Naive thymus-derived CD4-positive, alpha-beta T cell (primary cell): ENCODE measurements at regions of chr14 and their contacts with region 1.

Region 1: DNA sequence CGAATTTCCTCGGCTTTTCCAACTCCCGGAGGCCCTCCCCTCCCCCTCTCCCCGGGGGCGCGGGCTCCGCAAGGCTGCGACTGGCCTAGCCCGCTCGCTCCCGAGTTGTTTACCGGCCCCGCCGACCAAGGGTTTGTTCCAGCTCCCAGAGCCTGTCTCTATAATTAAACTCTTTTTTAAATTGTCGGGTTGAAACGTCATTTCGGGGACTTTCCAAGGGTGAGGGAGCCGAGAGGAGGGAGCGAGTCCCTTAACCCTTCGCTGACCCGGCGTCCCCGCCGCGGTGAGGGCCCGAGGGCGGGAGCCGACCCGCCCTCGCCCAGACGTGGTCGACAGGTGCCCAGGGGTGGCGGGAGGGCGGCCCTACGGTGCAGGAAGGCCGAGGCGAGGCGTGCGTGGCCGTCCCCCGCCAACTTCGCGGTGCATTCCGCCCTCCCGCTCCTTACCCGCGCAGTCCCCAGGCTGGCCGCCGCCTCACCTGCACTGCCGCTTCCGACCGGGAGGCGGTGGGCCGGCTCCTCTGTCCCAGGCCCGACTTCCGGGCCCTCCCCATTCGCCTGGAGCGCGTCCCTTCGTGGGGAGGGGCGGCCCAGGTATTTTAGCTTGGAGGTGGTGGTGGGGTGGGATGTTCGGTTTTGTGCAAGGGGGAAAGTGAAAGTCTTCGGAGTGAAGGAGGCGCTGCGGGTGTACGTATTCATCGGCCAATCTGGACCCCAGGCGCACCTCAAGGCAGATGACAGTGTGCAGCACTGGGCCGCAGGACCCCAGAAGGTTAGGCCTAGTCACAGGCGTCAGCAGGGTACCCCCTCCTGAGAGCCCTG is 2.9 kb upstream of the ZFP36L1 start:
- DNase-seq: peak; percentile 77 to 92 (median 86)
- ATAC-seq: peak; percentile 56
- H3K4me3 ChIP-seq: peak overlapping the region; percentile 91
- H3K4me3 Mint-ChIP-seq: peak overlapping the region; percentile 92 to 99 (median 95)
- H3K27ac ChIP-seq: peak overlapping the region; percentile 100
- H3K27ac Mint-ChIP-seq: peak overlapping the region; percentile 91 to 100 (median 98)
- H3K4me1 ChIP-seq: peaks cover 11 to 18% of the 10 kb centered on the region in 2 donors
- H3K4me1 Mint-ChIP-seq: peaks cover 9 to 37% (median 31%) of the 10 kb centered on the region in 7 donors
- H3K27me3 ChIP-seq: no peaks in the 10 kb centered on the region
- H3K27me3 Mint-ChIP-seq: peaks cover 0 to 4% (median 0%) of the 10 kb centered on the region in 5 donors

Region 2: GRCh38 chr14:68210729-68211299 is 585.0 kb before region 1 on chr14:
- CTCF ChIA-PET with region 1: interaction called, 3 read pairs
- POLR2A ChIA-PET with region 1: no interaction called
- intact Hi-C with region 1: loop called in 1 of 2 experiments (anchors 2 kb)
- DNase-seq: peak in 8 of 9 donors; percentile 10 to 54 (median 43)
- ATAC-seq: peak; percentile 86
- H3K4me3 ChIP-seq: peak overlapping the region; percentile 59
- H3K4me3 Mint-ChIP-seq: peak overlapping the region; percentile 75 to 90 (median 88)
- H3K27ac ChIP-seq: peak overlapping the region; percentile 23
- H3K27ac Mint-ChIP-seq: peak overlapping the region; percentile 71 to 94 (median 87)
- H3K4me1 ChIP-seq: peaks cover 28 to 33% of the 10 kb centered on the region in 2 donors
- H3K4me1 Mint-ChIP-seq: peaks cover 31 to 50% (median 38%) of the 10 kb centered on the region in 7 donors
- H3K27me3 ChIP-seq: no peaks in the 10 kb centered on the region
- H3K27me3 Mint-ChIP-seq: peaks cover 0 to 2% (median 0%) of the 10 kb centered on the region in 5 donors

Region 3: GRCh38 chr14:68506021-68506644 is 289.7 kb before region 1 on chr14:
- CTCF ChIA-PET with region 1: interaction called, 41 read pairs
- POLR2A ChIA-PET with region 1: interaction called, 149 read pairs
- intact Hi-C with region 1: no loop called
- DNase-seq: peak in 2 of 9 donors; percentile 13 to 14
- ATAC-seq: no peak
- H3K4me3 ChIP-seq: peak overlapping the region; percentile 19
- H3K4me3 Mint-ChIP-seq: peak overlapping the region; percentile 39 to 84 (median 78)
- H3K27ac ChIP-seq: peak overlapping the region; percentile 52
- H3K27ac Mint-ChIP-seq: peak overlapping the region in 8 of 9 donors; percentile 89 to 98 (median 93)
- H3K4me1 ChIP-seq: peaks cover 29 to 66% of the 10 kb centered on the region in 2 donors
- H3K4me1 Mint-ChIP-seq: peaks cover 28 to 93% (median 86%) of the 10 kb centered on the region in 7 donors
- H3K27me3 ChIP-seq: no peaks in the 10 kb centered on the region
- H3K27me3 Mint-ChIP-seq: no peaks in the 10 kb centered on the region

Region 4: GRCh38 chr14:68807148-68807600 is 11.4 kb after region 1 on chr14:
- CTCF ChIA-PET with region 1: interaction called, 169 read pairs
- POLR2A ChIA-PET with region 1: interaction called, 1,273 read pairs
- intact Hi-C with region 1: no loop called
- DNase-seq: peak in 2 of 9 donors; percentile 33 to 37
- ATAC-seq: peak; percentile 82
- H3K4me3 ChIP-seq: no peak overlapping the region
- H3K4me3 Mint-ChIP-seq: peak overlapping the region in 7 of 10 donors; percentile 8 to 60 (median 45)
- H3K27ac ChIP-seq: no peak overlapping the region
- H3K27ac Mint-ChIP-seq: peak overlapping the region in 8 of 9 donors; percentile 6 to 88 (median 75)
- H3K4me1 ChIP-seq: peaks cover 3 to 17% of the 10 kb centered on the region in 2 donors
- H3K4me1 Mint-ChIP-seq: peaks cover 10 to 67% (median 61%) of the 10 kb centered on the region in 7 donors
- H3K27me3 ChIP-seq: no peaks in the 10 kb centered on the region
- H3K27me3 Mint-ChIP-seq: no peaks in the 10 kb centered on the region

Region 5: DNA sequence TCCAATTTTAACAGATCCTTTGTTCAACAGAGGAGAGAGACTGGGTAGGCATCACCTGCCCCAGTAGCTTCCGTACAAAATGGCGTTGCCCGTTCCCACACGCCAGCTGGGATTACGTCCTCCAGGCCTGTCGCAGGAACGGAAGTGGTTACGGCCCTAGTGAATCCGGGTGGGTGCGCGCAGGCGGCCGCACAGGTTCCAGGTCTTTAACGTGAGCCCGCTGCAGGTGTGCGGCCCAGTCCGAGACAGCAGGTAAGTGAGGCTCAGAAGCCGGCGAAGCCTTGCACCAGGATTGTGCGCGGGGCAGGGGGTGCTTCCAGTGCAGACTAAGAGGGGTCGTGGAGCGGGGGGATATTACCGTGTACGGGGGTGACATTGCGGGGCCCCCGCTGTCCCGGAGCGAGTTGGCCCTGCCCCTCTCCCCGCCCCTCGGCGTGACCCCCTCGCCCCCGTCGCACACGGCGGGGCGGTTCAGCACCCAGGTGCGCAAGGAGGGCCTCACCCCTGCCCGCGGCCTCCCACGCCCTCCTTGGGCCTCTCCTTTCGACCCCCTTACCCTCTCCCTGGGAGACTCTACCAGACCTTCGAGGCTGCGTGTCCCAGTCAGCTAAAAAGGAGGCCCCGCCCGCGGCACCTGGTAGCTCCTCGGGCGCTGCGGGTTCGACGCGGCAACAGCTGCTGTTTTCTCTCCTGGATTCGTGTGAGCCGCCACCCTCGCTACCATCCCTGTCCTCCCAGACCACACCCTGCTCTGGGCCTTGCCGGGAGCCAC is 395.7 kb after region 1 on chr14 and contains the start of gene EXD2:
- CTCF ChIA-PET with region 1: no interaction called
- POLR2A ChIA-PET with region 1: no interaction called
- intact Hi-C with region 1: loop called in 1 of 2 experiments (anchors 5 kb)
- DNase-seq: peak; percentile 27 to 68 (median 61)
- ATAC-seq: peak; percentile 81
- H3K4me3 ChIP-seq: peak within 1 kb of the TSS; percentile 71
- H3K4me3 Mint-ChIP-seq: peak within 1 kb of the TSS; percentile 91 to 97 (median 94)
- H3K27ac ChIP-seq: peak within 1 kb of the TSS; percentile 70
- H3K27ac Mint-ChIP-seq: peak within 1 kb of the TSS; percentile 80 to 96 (median 92)
- H3K4me1 ChIP-seq: peaks cover 0 to 6% of the 10 kb centered on the region in 2 donors
- H3K4me1 Mint-ChIP-seq: peaks cover 16 to 44% (median 38%) of the 10 kb centered on the region in 7 donors
- H3K27me3 ChIP-seq: no peaks in the 10 kb centered on the region
- H3K27me3 Mint-ChIP-seq: peaks cover 0 to 14% (median 0%) of the 10 kb centered on the region in 5 donors
- total RNA-seq, gene EXD2: 4.8 to 17.2 (median 10.6) TPM